Prostate gland (tissue), 2 donors: ENCODE measurements at regions of chr6 and their contacts with region 1.

Region 1: GRCh38 chr6:131199568-131200272 is 64.5 kb downstream of the AKAP7 start:
- DNase-seq: no peak
- H3K4me3 ChIP-seq: no peak overlapping the region
- H3K27ac ChIP-seq: no peak overlapping the region
- H3K4me1 ChIP-seq: no peaks in the 10 kb centered on the region
- H3K27me3 ChIP-seq: no peaks in the 10 kb centered on the region
- CTCF ChIP-seq: peak in 3 of 4 experiments; percentile 40 to 60 (median 45)
- POLR2A ChIP-seq: no peak

Region 2: GRCh38 chr6:130980310-130981032 is 219.2 kb before region 1 on chr6:
- intact Hi-C with region 1: no loop called
- DNase-seq: no peak
- H3K4me3 ChIP-seq: no peak overlapping the region
- H3K27ac ChIP-seq: no peak overlapping the region
- H3K4me1 ChIP-seq: no peaks in the 10 kb centered on the region
- H3K27me3 ChIP-seq: no peaks in the 10 kb centered on the region
- CTCF ChIP-seq: no peak
- POLR2A ChIP-seq: no peak

Region 3: DNA sequence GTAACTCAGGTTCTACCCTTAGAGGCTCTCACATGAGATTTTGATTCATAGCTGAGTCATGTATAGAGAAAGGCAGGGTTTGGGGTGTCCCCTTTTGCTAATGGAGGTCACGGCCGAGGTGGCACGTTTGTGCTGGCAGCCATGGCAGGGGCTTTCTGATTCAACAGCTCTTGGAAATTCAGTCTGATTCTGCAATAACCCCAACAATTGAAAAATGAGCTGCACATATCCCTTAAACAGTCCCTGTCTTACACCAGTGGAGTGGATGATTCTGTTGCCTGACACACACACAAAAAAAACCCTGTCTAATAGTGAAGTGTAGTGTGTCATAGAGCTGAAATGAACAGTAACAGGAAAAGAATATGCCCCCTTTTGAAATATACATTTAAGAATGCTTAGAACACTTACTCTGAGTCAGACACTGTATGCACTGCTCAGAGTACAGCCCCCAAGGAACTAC is 332.9 kb after region 1 on chr6:
- intact Hi-C with region 1: loop called (anchors 10 kb)
- DNase-seq: no peak
- H3K4me3 ChIP-seq: no peak overlapping the region
- H3K27ac ChIP-seq: no peak overlapping the region
- H3K4me1 ChIP-seq: no peaks in the 10 kb centered on the region
- H3K27me3 ChIP-seq: no peaks in the 10 kb centered on the region
- CTCF ChIP-seq: no peak
- POLR2A ChIP-seq: no peak

Region 4: GRCh38 chr6:132344811-132345210 is 1145.1 kb after region 1 on chr6:
- intact Hi-C with region 1: no loop called
- DNase-seq: no peak
- H3K4me3 ChIP-seq: no peak overlapping the region
- H3K27ac ChIP-seq: no peak overlapping the region
- H3K4me1 ChIP-seq: no peaks in the 10 kb centered on the region
- H3K27me3 ChIP-seq: no peaks in the 10 kb centered on the region
- CTCF ChIP-seq: no peak
- POLR2A ChIP-seq: no peak